ENCODE measurements at regions of chr15 and their contacts with region 1.

Region 1: GRCh38 chr15:32669896-32670619 is 28.5 kb downstream of the SCG5 start:
- DNase-seq: no peak
- H3K4me3 ChIP-seq: no peak overlapping the region
- H3K27ac ChIP-seq: peak overlapping the region; percentile 78
- H3K4me1 ChIP-seq: peaks cover 27% of the 10 kb centered on the region
- H3K27me3 ChIP-seq: no peaks in the 10 kb centered on the region
- CTCF ChIP-seq: no peak
- POLR2A ChIP-seq: no peak

Region 2: DNA sequence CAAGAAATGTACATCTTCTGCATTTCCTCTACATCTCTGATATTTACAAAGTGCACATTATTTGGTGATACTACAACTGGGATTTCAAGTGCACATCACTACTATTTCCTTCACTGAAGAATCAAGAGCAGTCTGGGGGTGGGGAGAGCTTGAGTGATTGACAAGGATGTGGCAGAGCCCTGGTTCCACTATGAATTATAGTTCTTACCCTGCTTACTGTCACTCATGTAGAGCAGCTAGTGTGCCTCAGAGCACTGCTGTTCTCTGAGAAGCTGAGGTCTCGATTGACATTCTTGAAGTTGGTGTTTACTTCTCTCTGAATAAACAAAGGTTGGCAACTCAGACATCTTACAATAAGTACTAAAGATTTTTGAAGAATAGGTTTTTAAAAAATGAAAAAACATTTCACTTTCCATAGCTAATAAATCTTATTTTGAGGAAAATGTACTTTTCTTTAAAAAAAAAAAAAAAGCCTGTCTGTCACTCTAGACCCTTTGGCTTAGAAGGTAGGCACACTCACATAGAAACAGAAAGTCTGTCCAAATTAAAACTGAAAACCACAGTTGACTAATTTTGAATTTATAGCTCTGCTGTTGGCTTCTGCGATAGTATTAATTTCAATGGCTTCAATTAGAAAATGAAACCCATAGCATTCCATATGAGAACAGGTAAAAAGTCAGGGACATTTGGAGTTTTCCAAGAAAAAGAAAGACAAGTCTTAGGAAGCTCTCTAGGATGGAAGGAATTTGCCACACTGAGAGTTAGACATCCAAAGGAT is 53.3 kb after region 1 on chr15:
- intact Hi-C with region 1: loop called (anchors 10 kb)
- DNase-seq: no peak
- H3K4me3 ChIP-seq: no peak overlapping the region
- H3K27ac ChIP-seq: no peak overlapping the region
- H3K4me1 ChIP-seq: peaks cover 8% of the 10 kb centered on the region
- H3K27me3 ChIP-seq: no peaks in the 10 kb centered on the region
- CTCF ChIP-seq: no peak
- POLR2A ChIP-seq: no peak

Region 3: GRCh38 chr15:32736005-32736700 is 66.1 kb after region 1 on chr15:
- intact Hi-C with region 1: no loop called
- DNase-seq: no peak
- H3K4me3 ChIP-seq: no peak overlapping the region
- H3K27ac ChIP-seq: no peak overlapping the region
- H3K4me1 ChIP-seq: peaks cover under 1% of the 10 kb centered on the region
- H3K27me3 ChIP-seq: no peaks in the 10 kb centered on the region
- CTCF ChIP-seq: no peak
- POLR2A ChIP-seq: no peak

Region 4: DNA sequence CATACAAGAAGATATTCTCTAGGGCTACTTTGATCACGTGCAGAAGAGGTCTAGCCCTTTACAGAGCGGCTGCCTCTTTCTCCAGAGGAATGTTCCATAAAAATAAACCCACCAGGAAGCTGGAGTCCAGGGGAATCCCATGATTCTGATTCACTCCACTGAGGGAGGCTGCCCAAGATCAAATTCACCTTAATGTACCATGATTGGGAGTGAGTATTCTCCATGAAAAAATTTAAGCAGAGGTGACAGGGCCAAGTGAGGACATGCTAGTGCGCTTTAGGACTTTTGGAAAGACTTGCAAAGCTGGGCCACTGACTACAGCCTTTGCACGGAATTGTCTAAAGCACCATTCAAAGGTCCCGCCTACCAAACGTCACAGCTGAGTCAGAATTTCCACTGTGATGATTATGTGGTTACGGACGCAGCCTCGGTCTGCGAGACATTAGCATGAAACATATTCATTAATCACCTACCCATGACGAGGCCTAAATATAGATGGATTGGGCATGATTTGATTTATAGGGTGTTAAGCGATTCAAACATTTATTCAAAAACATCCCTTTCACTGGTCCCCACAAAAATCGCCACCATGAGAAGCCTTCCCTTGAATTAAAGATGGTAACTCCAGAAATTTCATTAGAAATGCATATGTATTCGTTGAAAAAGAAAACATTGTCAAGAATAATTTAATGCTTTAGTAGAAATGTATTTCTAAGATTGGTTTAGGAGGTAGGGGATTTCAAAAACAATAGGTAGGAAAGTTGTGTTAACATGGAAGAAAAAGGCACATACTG is 200.4 kb after region 1 on chr15:
- intact Hi-C with region 1: loop called (anchors 10 kb)
- DNase-seq: no peak
- H3K4me3 ChIP-seq: no peak overlapping the region
- H3K27ac ChIP-seq: no peak overlapping the region
- H3K4me1 ChIP-seq: peaks cover 12% of the 10 kb centered on the region
- H3K27me3 ChIP-seq: no peaks in the 10 kb centered on the region
- CTCF ChIP-seq: no peak
- POLR2A ChIP-seq: no peak

Region 5: DNA sequence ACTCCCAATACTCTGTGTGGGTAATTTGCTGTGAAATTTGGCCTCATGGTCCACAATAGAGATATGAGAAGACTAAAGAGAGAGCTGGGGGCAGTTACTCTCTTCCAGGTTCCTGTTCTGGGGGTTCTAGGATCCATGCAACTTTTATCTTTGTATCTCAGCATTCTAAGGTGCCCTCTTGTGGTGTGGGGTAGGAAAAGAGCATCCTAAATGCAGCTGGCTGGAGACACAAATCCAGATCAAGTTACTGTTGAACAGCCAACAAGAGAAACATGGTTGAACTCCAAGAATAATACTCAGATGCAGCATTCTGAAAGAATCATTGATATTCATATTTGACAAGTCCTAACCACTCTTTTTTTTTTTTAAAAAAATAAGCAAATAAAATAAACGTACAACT is 285.9 kb after region 1 on chr15:
- intact Hi-C with region 1: loop called (anchors 5 kb)
- DNase-seq: no peak
- H3K4me3 ChIP-seq: no peak overlapping the region
- H3K27ac ChIP-seq: no peak overlapping the region
- H3K4me1 ChIP-seq: no peaks in the 10 kb centered on the region
- H3K27me3 ChIP-seq: no peaks in the 10 kb centered on the region
- CTCF ChIP-seq: peak in 2 of 3 experiments; percentile 14 to 21
- POLR2A ChIP-seq: no peak

Measured in vagina (tissue), 2 donors.